ENCODE measurements at regions of chr2 and their contacts with region 1.

Region 1: DNA sequence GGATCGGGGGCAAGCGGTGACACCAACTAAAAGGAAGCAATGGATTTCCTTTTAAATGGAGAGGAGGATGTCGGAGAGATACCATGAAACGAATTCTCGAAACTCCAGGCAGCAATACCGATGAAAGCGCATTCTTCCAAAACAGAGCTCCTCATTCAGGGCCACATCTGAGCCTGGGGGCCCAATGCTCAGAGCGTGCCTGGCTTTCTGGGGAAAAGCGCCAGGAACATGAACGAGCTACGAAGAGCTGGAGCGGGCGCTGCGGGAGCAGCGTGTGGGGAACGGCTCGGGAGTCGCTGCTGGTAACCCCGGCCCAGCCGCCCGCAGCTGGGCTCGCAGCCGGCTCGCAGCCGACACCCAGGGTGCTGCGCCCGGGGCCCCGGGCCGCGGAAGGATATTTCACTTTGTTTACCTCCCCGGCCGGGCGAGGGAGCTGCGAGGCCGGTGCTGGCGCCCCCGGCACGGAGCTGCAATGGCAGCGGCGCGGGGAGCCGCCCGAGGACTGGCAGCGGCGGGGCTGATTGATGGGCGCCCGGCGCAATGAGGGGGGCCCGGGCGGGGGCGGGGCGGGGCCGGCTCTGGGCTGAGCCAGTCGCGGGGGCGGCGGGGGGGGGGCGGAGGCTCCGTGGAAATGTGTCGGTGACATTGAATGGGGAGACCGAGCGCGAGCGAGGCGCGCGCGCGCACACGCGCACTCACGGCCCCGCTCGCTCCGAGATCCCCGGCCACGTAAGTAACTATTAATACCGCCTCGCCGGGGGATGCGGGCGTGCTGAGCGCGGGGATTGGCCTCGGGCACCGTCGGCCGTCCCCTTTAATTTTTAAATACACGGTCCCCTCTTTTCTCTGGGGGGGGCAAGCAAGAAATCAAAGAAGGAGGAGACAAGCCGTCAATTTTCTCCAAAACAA is at the start of gene TRIB2:
- DNase-seq: peak; percentile 92
- ATAC-seq: peak; percentile 85 to 89
- total RNA-seq, gene TRIB2: 32.5 to 43.6 TPM

Region 2: DNA sequence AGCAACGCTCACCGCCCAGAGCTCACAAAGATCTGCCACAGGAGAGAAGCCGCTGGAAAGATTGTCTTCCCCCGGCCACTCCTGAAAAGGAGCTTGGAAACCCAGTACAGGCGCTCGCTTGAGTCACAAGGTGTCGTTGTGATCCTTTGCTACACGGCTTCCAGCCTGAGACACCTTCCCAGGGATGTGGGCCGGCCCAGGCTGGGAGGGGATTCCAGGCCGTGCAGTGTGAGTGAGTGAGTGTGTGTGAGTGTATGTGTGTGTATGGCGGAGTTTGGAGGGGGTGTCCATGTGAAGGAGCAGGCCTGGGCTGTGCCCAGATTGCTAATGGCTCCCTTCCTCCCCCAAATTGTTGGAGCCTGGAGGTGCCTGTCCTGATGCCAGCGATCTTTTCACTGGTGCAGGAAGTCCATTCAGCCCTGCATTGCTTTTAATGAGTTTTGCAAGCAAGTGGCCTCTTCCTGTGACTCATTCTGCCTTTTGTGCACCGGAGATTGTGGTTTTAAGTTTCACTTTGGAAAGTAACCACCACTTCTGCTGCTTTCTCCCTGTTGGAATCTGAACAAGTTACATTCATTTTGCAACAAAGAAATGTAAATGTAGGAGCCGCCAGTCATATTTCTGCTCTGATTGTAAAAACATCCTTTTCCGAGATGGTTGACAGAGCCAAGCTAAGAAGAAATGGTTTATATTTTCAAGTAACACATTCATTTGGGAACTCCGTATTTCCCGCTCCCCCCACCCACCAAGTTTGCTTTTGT is 886.4 kb before region 1 on chr2:
- intact Hi-C with region 1: loop called in 1 of 2 experiments (anchors 5 kb)
- DNase-seq: peak; percentile 61
- ATAC-seq: peak; percentile 77 to 85

Region 3: DNA sequence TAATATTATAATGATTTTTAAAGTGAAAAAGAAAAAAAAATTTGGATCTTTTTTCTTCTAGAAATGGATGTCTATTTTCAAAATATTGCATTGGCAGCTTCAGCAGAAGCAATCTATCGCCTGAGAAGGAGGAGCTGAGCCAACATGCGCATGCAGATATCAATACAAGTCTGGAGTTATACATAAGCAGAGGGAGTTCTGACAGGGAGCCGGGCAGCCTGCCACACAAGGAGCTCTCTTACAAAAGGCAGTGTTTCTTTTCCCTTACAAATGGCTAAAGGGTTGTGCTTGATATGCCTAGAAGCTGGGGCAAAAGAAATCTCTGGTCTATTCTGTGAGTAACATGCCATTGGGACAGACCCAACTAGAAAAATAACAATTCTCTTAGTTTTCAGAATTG is 291.7 kb before region 1 on chr2:
- intact Hi-C with region 1: loop called in 1 of 2 experiments (anchors 5 kb)
- DNase-seq: peak; percentile 52
- ATAC-seq: peak in 1 of 2 donors; percentile 73

Region 4: DNA sequence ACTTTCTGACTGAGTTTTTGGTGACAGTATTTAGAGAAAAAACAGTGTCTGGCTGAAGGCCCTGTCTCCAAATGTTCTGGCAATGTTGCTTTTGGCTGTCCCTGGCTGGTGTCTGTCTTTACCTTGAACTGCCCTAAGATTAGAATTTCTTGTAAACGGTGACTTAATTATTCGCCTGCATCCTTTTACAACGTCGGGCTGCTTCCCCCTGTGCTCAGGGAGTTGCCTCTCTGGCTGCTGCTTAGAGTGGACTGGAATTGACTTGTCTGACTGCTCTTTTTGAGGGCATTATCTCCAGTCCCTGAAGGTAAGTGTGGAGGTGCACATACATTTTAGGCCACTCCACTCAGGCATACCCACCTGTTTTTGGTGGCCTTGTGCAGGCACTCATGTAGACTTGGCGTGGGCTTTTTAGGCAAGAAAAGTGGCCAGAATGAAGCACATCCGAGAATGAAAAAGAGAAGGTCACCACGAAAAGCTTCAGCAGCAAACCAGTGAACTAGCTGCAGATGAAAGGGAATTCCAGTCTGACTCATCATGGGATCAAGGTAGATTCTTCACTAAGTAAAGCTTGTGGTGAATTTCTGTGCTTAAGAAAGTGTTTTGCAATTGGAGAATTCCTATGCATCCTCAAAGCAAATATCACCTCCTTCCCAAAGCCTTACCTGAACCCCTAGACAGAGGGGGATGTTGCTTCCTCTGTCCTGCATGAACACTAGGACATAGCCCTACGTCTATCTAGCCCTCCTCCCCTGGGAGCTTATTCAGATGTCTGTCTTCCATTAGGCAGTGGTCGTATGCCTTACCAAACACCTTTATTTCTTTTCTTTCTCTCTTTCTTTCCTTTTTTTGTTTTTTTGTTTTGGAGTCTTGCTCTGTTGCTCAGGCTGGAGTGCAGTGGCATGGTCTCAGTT is 230.1 kb before region 1 on chr2:
- intact Hi-C with region 1: loop called in 1 of 2 experiments (anchors 10 kb)
- DNase-seq: peak; percentile 35
- ATAC-seq: peak in 1 of 2 donors; percentile 51

Region 5: GRCh38 chr2:12579018-12579417 is 137.5 kb before region 1 on chr2:
- intact Hi-C with region 1: no loop called
- DNase-seq: no peak
- ATAC-seq: no peak

Region 6: DNA sequence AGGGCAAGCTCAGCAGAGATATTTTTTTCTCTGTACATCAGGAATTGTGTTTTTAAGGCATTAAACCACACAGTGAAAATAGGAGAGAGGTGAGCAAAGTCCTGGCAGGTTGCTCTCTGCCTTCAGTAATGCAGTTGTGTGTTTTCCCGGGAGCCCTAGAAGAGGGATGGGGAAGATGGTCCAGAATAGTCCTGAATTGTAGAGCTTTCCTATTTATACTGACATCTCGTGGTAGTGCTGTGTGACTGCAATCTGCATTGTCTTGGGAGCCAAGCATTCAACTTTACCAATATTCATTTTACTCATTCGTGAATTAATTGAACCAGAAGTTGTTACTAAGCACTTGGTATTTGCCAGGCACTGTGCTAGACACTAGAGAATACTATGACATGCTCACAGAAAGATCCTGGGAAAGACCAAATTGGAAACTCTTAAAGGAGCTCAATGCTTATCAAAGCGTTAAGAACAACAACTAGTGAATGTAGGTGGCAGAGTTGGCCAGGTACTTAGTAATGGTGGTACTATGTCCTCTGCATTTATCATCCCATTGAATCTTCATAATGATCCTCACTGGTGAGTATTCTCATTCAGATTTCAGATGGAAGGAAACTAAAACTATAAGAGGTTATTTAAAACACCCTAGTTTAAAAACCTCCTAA is 214.8 kb after region 1 on chr2:
- intact Hi-C with region 1: loop called (anchors 2 to 5 kb)
- DNase-seq: no peak
- ATAC-seq: peak; percentile 86 to 90

Measured in left cardiac atrium (tissue), 4 donors.